HepG2 (cell line): ENCODE measurements at regions of chr2 and their contacts with region 1.

Region 1: DNA sequence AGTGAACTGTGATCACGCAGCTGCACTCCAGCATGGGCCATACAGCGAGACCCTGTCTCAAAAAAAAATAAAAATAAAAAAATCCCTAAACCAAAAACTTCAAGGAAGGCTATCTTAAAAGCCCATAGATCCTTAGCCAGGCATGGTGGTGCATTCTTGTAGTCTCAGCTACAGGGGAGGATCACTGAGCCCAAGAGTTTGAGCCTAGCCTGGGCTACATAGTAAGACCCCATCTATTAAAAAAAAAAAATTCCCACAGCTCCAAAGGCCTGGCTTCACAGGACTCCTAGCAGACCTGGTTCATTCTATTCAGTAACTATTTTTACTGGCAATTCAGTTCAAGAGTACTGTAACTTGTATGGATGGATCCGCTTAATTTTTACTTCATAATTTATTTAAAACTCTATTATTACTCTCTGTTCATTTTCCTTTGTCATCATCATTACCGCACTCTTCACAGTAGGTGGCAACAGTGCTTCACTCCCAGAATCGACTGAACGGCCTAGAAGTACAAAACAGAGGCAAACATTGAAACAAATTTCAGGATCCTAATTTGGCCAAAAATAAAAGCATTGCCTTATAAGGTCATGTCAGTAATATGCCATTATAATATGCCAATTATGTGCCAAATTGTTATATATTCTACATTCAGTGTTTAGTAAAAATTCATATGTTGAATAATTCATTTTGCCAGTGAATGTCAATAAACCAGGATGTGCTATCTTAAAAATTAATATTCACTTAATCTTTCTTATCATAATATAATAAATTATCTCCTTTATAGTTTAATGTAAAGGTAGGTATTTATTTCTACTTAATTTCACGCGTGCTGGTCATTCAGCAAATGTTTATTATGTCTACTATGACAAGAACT is 14.3 kb upstream of the STAM2 start:
- DNase-seq: peak; percentile 71
- ATAC-seq: peak; percentile 92
- H3K4me3 ChIP-seq: no peak overlapping the region
- H3K27ac ChIP-seq: no peak overlapping the region
- H3K4me1 ChIP-seq: peaks cover 18% of the 10 kb centered on the region; the same call in 1 of the 2 replicates
- H3K27me3 ChIP-seq: 0 out of 5 replicates have a peak, but pooled peaks cover 0 to 2% of the 10 kb centered on the region in 2 experiments
- CTCF ChIP-seq: peak; percentile 84
- EP300 ChIP-seq: no peak
- POLR2A ChIP-seq: no peak
- RAD21 ChIP-seq: peak; percentile 88

Region 2: GRCh38 chr2:152558158-152558984 is 368.5 kb after region 1 on chr2:
- CTCF ChIA-PET with region 1: interaction called, 12 read pairs
- POLR2A ChIA-PET with region 1: no interaction called
- in situ Hi-C with region 1: no loop called
- intact Hi-C with region 1: loop called (anchors 1 kb)
- DNase-seq: no peak
- ATAC-seq: no peak
- H3K4me3 ChIP-seq: no peak overlapping the region
- H3K27ac ChIP-seq: no peak overlapping the region
- H3K4me1 ChIP-seq: no peaks in the 10 kb centered on the region
- H3K27me3 ChIP-seq: no peaks in the 10 kb centered on the region
- CTCF ChIP-seq: no peak
- EP300 ChIP-seq: no peak
- POLR2A ChIP-seq: no peak
- RAD21 ChIP-seq: no peak

Region 3: DNA sequence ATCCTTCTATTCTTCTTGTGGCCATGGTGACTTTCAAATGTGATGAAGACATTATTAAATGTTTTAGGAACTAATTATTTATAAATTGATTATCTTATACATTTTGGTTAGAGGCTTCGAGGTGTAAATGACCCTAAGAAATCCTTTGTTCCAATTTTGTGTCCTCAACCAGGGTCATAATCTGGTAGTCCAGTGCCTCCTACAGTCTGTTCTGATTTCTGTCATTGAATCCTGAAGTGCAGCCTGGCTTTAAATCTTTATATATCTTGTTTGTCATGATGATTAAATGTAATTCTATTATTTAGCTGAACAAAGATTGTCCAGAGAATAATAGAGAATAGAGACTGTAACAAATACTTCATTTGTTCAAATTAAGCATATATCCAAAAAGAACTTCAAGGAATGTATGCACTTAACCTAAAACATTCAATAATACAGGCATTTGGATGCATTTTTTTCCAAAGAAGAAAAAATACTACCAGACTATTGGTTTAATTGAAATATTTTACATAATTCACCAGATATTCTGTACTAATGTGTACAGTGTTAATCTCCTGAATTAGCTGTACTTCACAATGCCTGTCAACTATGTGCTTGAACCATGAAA is 437.6 kb after region 1 on chr2:
- CTCF ChIA-PET with region 1: interaction called, 3 read pairs
- POLR2A ChIA-PET with region 1: no interaction called
- in situ Hi-C with region 1: no loop called
- intact Hi-C with region 1: loop called (anchors 2 kb)
- DNase-seq: no peak
- ATAC-seq: peak; percentile 42; the same call in 1 of the 3 replicates
- H3K4me3 ChIP-seq: no peak overlapping the region
- H3K27ac ChIP-seq: no peak overlapping the region
- H3K4me1 ChIP-seq: peaks cover 5% of the 10 kb centered on the region; the same call in 1 of the 2 replicates
- H3K27me3 ChIP-seq: no peaks in the 10 kb centered on the region
- CTCF ChIP-seq: peak; percentile 46
- EP300 ChIP-seq: no peak
- POLR2A ChIP-seq: no peak
- RAD21 ChIP-seq: no peak

Region 4: GRCh38 chr2:152635635-152636298 is 445.9 kb after region 1 on chr2:
- CTCF ChIA-PET with region 1: interaction called, 38 read pairs
- POLR2A ChIA-PET with region 1: no interaction called
- in situ Hi-C with region 1: loop called (anchors 5 kb)
- intact Hi-C with region 1: loop called (anchors 1 kb)
- DNase-seq: peak; percentile 76
- ATAC-seq: peak; percentile 77
- H3K4me3 ChIP-seq: no peak overlapping the region
- H3K27ac ChIP-seq: no peak overlapping the region
- H3K4me1 ChIP-seq: peaks cover 5% of the 10 kb centered on the region; the same call in 1 of the 2 replicates
- H3K27me3 ChIP-seq: no peaks in the 10 kb centered on the region
- CTCF ChIP-seq: peak; percentile 94
- EP300 ChIP-seq: no peak
- POLR2A ChIP-seq: no peak
- RAD21 ChIP-seq: peak; percentile 87